Gastrocnemius medialis (tissue), 4 donors: ENCODE measurements at regions of chr12 and their contacts with region 1.

Region 1: GRCh38 chr12:70733385-70733784 is 96.2 kb upstream of the PTPRB start:
- DNase-seq: no peak
- ATAC-seq: no peak
- H3K4me3 ChIP-seq: no peak overlapping the region
- H3K27ac ChIP-seq: no peak overlapping the region
- H3K4me1 ChIP-seq: no peaks in the 10 kb centered on the region
- H3K27me3 ChIP-seq: no peaks in the 10 kb centered on the region
- CTCF ChIP-seq: peak in 3 of 5 experiments; percentile 29 to 59 (median 52)
- POLR2A ChIP-seq: no peak

Region 2: DNA sequence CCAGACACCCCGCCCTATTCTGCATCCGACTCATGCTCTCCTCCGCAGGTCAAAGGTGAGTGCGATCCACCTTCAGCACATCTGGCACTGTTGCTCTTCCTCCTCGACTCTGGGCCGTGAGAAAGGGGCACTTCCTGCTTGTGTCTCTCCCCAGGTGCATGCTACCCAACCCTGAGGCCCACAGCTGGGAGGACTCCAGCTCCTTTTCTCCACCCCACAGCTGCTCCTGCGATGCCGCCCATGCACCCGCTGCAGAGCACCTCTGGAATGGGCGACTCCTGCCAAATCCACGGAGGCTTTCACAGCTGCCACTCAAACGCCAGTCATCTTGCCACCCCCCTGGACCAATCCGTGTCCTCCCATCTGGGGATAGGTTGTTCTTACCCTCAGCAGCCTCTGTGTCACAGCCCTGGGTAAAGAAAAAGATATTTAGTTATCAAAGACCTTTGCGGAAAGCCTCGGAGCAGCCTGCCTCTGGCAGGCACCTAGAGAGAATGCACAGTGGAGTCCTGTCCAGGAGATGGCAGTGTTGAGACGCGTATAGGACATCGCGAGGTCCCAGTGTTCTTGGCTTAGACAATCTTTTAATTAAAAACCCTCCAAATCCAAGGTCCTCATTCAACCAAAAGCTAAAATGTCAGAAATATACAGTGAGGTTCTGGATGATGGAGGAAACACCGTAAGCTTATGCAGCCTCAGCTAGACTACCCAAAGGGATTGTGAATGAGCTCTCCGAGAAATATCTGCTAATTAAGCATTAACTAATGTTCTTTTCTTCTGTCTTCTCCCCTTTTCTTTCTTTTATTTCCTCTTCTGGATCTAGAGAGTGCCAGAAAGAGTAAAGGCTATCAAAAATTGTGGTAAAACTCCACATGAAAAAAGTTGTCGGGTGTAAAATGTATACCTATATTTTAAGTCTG is 854.1 kb before region 1 on chr12:
- in situ Hi-C with region 1: loop called (anchors 10 to 25 kb)
- intact Hi-C with region 1: no loop called
- DNase-seq: peak; percentile 34 to 42
- ATAC-seq: peak; percentile 87 to 88
- H3K4me3 ChIP-seq: peak overlapping the region in 3 of 4 donors; percentile 24 to 48 (median 29)
- H3K27ac ChIP-seq: no peak overlapping the region
- H3K4me1 ChIP-seq: peaks cover 0 to 4% of the 10 kb centered on the region in 2 donors
- H3K27me3 ChIP-seq: no peaks in the 10 kb centered on the region
- CTCF ChIP-seq: peak; percentile 59 to 88 (median 80)
- POLR2A ChIP-seq: no peak

Region 3: GRCh38 chr12:70784042-70784668 is 50.8 kb after region 1 on chr12:
- in situ Hi-C with region 1: no loop called
- intact Hi-C with region 1: no loop called
- DNase-seq: no peak
- ATAC-seq: no peak
- H3K4me3 ChIP-seq: no peak overlapping the region
- H3K27ac ChIP-seq: no peak overlapping the region
- H3K4me1 ChIP-seq: no peaks in the 10 kb centered on the region
- H3K27me3 ChIP-seq: no peaks in the 10 kb centered on the region
- CTCF ChIP-seq: no peak
- POLR2A ChIP-seq: no peak

Region 4: DNA sequence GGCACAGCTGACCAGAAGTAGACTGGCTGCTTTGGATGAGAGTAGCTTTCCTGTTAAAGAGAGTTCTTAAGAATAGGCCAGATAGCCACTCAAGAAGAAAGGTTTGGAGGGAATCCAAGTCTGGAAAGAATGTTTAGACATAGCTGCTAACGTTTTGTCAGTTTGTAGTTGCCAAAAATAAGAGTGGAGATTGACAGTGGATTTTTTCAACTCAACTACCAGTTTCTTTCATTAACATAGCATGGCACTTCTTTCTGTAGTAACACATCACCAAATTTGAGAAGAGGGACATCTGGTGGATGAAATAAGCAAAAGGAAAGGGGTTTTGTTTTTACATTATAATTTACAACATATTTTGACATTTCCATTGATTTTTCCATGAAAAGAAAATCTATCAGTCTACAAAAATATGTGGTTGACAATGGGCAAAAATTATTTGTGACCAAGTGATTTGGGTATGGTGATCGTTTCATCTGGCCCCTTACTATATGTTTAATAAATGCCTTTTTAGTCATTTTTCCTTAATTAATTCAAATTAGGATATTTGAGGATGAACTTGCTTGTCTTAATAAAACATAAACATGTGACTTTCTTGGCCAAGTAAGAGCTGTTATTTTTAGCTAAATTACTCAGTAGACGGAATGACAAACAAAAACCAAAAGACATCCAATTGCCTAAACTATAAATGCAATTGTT is 116.0 kb after region 1 on chr12:
- in situ Hi-C with region 1: no loop called
- intact Hi-C with region 1: loop called (anchors 10 kb)
- DNase-seq: no peak
- ATAC-seq: no peak
- H3K4me3 ChIP-seq: no peak overlapping the region
- H3K27ac ChIP-seq: no peak overlapping the region
- H3K4me1 ChIP-seq: no peaks in the 10 kb centered on the region
- H3K27me3 ChIP-seq: no peaks in the 10 kb centered on the region
- CTCF ChIP-seq: peak in 1 of 5 experiments; percentile 39
- POLR2A ChIP-seq: no peak

Region 5: GRCh38 chr12:71014180-71014785 is 280.9 kb after region 1 on chr12:
- in situ Hi-C with region 1: no loop called
- intact Hi-C with region 1: loop called (anchors 10 kb)
- DNase-seq: no peak
- ATAC-seq: no peak
- H3K4me3 ChIP-seq: no peak overlapping the region
- H3K27ac ChIP-seq: no peak overlapping the region
- H3K4me1 ChIP-seq: no peaks in the 10 kb centered on the region
- H3K27me3 ChIP-seq: no peaks in the 10 kb centered on the region
- CTCF ChIP-seq: peak in 1 of 5 experiments; percentile 20
- POLR2A ChIP-seq: no peak

Region 6: GRCh38 chr12:71392521-71393145 is 659.2 kb after region 1 on chr12:
- in situ Hi-C with region 1: loop called in 2 of 4 experiments (anchors 25 kb)
- intact Hi-C with region 1: no loop called
- DNase-seq: no peak
- ATAC-seq: peak; percentile 86 to 98
- H3K4me3 ChIP-seq: no peak overlapping the region
- H3K27ac ChIP-seq: peak overlapping the region in 1 of 4 donors; percentile 20
- H3K4me1 ChIP-seq: no peaks in the 10 kb centered on the region
- H3K27me3 ChIP-seq: no peaks in the 10 kb centered on the region
- CTCF ChIP-seq: peak; percentile 57 to 75 (median 72)
- POLR2A ChIP-seq: no peak

Region 7: DNA sequence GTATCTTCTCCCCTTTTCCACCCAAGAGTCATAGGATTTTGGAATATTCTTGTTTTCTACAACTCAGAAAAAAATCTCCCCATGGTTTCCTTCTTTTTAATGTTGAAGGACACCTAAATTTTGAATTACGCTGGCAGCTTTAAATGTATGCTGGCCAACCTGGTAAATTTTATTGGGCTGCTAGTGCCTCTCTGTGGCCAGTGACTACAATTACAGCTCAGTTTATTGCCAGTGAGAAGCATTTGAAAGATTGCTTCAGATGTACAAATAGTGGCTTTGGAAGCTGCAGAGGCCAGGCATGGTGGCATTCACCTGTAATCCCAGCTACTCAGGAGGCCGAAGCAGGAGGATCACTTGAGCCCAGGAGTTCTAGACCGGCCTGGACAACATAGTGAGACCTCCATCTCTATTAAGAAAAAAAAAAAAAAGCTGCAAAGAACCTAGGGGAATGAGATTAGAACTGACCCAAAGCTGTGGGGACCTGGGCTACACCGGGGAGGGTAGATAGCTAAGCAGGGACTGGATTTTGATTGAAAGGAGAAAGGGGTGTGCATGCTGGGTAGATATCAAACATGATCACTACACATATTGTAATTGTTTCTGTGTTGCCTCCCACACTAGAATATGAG is 1013.7 kb after region 1 on chr12:
- in situ Hi-C with region 1: loop called in 1 of 4 experiments (anchors 25 kb)
- intact Hi-C with region 1: no loop called
- DNase-seq: peak in 1 of 2 donors; percentile 16
- ATAC-seq: peak; percentile 97 to 98
- H3K4me3 ChIP-seq: no peak overlapping the region
- H3K27ac ChIP-seq: no peak overlapping the region
- H3K4me1 ChIP-seq: peaks cover 0 to 3% of the 10 kb centered on the region in 2 donors
- H3K27me3 ChIP-seq: no peaks in the 10 kb centered on the region
- CTCF ChIP-seq: peak; percentile 43 to 81 (median 70)
- POLR2A ChIP-seq: no peak